CD4-positive, alpha-beta memory T cell (primary cell): ENCODE measurements at regions of chr2 and their contacts with region 1.

Region 1: DNA sequence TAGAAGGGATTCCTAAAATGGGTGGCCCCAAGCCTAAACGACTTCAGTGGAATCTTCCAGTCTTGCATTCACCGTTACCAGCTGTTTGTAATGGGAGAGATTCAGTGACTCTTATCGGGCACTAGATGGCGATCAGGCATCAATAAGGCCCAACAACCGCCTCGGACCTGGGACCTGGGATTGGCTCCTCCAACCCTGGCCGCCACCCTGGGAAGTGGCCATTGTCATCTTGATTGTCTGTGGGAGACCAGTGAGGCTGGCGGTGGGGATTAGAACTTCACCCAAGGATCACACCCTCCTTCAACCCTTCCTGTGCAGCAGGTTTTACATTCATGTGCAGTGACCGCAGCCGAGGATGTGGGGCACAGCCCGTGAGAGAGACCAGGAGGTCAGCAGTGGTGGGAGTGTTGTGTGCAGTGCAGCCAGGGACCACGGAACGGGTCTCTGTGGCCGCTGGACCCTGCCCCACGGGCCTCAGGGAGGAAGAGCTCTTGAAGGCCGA is 85.3 kb downstream of the SPP2 start:
- DNase-seq: peak; percentile 31 to 51 (median 45)
- H3K4me3 ChIP-seq: no peak overlapping the region
- H3K4me3 Mint-ChIP-seq: peak overlapping the region in 4 of 8 donors; percentile 9 to 43 (median 27)
- H3K27ac ChIP-seq: no peak overlapping the region
- H3K27ac Mint-ChIP-seq: peak overlapping the region; percentile 16 to 78 (median 57)
- H3K4me1 ChIP-seq: peaks cover 28% of the 10 kb centered on the region
- H3K4me1 Mint-ChIP-seq: peaks cover 20 to 46% (median 28%) of the 10 kb centered on the region in 4 donors
- H3K27me3 ChIP-seq: no peaks in the 10 kb centered on the region
- H3K27me3 Mint-ChIP-seq: no peaks in the 10 kb centered on the region

Region 2: GRCh38 chr2:233801357-233802131 is 334.2 kb before region 1 on chr2:
- CTCF ChIA-PET with region 1: no interaction called
- POLR2A ChIA-PET with region 1: no interaction called
- intact Hi-C with region 1: no loop called
- DNase-seq: no peak
- H3K4me3 ChIP-seq: no peak overlapping the region
- H3K4me3 Mint-ChIP-seq: no peak overlapping the region
- H3K27ac ChIP-seq: no peak overlapping the region
- H3K27ac Mint-ChIP-seq: no peak overlapping the region
- H3K4me1 ChIP-seq: no peaks in the 10 kb centered on the region
- H3K4me1 Mint-ChIP-seq: no peaks in the 10 kb centered on the region
- H3K27me3 ChIP-seq: no peaks in the 10 kb centered on the region
- H3K27me3 Mint-ChIP-seq: peaks cover 8 to 17% of the 10 kb centered on the region in 2 donors

Region 3: GRCh38 chr2:233811732-233812131 is 324.0 kb before region 1 on chr2:
- CTCF ChIA-PET with region 1: no interaction called
- POLR2A ChIA-PET with region 1: no interaction called
- intact Hi-C with region 1: no loop called
- DNase-seq: no peak
- H3K4me3 ChIP-seq: no peak overlapping the region
- H3K4me3 Mint-ChIP-seq: no peak overlapping the region
- H3K27ac ChIP-seq: no peak overlapping the region
- H3K27ac Mint-ChIP-seq: no peak overlapping the region
- H3K4me1 ChIP-seq: no peaks in the 10 kb centered on the region
- H3K4me1 Mint-ChIP-seq: no peaks in the 10 kb centered on the region
- H3K27me3 ChIP-seq: no peaks in the 10 kb centered on the region
- H3K27me3 Mint-ChIP-seq: peaks cover 6 to 9% of the 10 kb centered on the region in 2 donors

Region 4: DNA sequence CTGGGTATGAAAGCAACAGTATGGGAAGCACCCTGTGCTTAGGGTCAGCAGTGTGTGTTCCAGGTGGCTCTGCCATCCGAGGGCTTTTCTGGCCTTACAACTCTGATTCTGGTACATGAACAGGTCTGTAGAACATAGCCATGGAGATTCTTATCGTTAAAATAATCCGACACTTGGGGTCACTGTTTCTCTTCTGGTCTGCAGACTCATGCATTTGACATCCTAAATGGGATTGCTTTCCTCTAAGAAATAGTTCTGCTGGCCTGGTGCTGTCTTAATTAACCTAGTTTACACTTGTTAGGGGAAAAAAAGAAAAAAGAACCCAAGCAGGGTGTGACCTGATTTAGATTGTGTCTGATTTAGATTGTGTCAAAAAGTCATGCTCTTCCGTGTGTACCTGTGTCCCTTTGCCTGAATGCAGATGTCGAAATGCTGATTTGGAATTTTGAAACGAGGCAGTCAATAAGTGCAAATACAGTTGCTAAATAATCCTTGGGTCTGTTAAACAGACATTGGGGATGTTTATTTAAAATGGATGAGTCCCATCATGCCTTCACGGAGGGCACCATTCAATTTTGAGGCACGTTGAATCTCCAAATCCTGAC is 159.0 kb before region 1 on chr2:
- CTCF ChIA-PET with region 1: interaction called, 7 read pairs
- POLR2A ChIA-PET with region 1: interaction called, 3 read pairs
- intact Hi-C with region 1: loop called (anchors 1 kb)
- DNase-seq: peak; percentile 40 to 69 (median 66)
- H3K4me3 ChIP-seq: no peak overlapping the region
- H3K4me3 Mint-ChIP-seq: peak overlapping the region in 6 of 8 donors; percentile 1 to 66 (median 27)
- H3K27ac ChIP-seq: no peak overlapping the region
- H3K27ac Mint-ChIP-seq: peak overlapping the region in 6 of 7 donors; percentile 9 to 83 (median 48)
- H3K4me1 ChIP-seq: peaks cover 24% of the 10 kb centered on the region
- H3K4me1 Mint-ChIP-seq: peaks cover 25 to 38% (median 27%) of the 10 kb centered on the region in 4 donors
- H3K27me3 ChIP-seq: no peaks in the 10 kb centered on the region
- H3K27me3 Mint-ChIP-seq: no peaks in the 10 kb centered on the region

Region 5: DNA sequence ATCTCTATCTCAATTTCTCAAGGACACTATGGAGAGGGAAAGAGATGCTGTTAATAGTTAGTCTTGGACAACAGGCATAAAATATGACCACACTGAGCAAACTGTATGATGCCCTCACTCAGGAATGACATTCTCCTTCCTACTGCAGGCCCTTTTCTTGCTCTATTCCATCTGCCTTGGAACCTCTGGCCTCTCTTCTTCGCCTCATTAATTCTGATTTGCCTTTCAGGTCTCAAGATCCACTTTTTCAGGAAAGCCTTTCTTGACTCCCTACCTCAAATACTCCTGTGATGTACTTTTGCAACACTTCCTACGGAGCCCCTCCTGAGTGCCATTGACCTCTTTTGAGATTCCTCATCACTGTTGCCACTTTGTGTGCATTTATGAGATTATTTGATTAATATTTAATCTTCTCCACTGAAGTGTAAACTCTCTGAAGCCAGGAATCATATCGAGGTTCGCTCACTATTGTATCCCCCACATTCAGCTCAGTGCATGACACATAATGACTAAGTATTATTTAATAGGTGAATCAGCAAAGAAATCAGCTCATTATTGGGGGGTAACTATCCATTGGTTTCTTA is 106.5 kb before region 1 on chr2:
- CTCF ChIA-PET with region 1: no interaction called
- POLR2A ChIA-PET with region 1: no interaction called
- intact Hi-C with region 1: no loop called
- DNase-seq: no peak
- H3K4me3 ChIP-seq: no peak overlapping the region
- H3K4me3 Mint-ChIP-seq: peak overlapping the region in 2 of 8 donors; percentile 17 to 40
- H3K27ac ChIP-seq: no peak overlapping the region
- H3K27ac Mint-ChIP-seq: peak overlapping the region in 2 of 7 donors; percentile 30 to 57
- H3K4me1 ChIP-seq: peaks cover 86% of the 10 kb centered on the region
- H3K4me1 Mint-ChIP-seq: peaks cover 59 to 90% (median 72%) of the 10 kb centered on the region in 4 donors
- H3K27me3 ChIP-seq: no peaks in the 10 kb centered on the region
- H3K27me3 Mint-ChIP-seq: peaks cover 0 to 1% of the 10 kb centered on the region in 2 donors

Region 6: DNA sequence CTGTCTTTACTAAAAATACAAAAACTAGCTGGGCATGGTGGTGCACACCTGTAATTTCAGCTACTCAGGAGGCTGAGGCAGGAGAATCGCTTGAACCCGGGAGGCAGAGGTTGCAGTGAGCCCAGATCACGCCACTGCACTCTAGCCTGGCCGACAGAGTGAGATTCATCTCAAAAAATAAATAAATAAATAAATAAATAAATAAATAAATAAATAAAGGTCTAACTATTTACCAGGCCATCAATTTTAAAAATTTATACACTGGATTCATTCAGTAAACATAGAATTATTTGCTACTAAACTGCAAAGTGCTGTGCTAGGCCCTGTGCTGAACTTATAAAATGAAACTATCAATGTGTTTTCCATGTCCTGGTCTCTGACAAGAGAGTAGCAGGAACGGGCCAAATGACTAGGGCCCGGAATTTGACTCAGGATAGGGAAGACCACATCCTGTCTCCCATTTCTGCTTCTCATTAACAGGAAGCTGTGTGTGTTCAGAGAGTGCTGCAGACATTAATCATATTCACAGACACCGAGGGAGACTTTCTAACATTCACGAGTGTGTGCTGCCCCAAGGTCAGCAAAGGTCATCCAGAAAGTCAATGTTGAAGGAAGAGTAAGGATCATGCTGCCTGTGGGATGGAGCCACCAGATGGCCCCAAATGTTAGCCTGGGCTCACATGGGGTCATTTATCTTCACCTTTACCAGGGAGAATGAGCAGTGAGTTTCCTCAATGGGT is 10.5 kb after region 1 on chr2:
- CTCF ChIA-PET with region 1: interaction called, 26 read pairs
- POLR2A ChIA-PET with region 1: interaction called, 7 read pairs
- intact Hi-C with region 1: no loop called
- DNase-seq: no peak
- H3K4me3 ChIP-seq: no peak overlapping the region
- H3K4me3 Mint-ChIP-seq: peak overlapping the region in 7 of 8 donors; percentile 4 to 77 (median 5)
- H3K27ac ChIP-seq: no peak overlapping the region
- H3K27ac Mint-ChIP-seq: peak overlapping the region in 6 of 7 donors; percentile 53 to 88 (median 84)
- H3K4me1 ChIP-seq: peaks cover 45% of the 10 kb centered on the region
- H3K4me1 Mint-ChIP-seq: peaks cover 40 to 80% (median 53%) of the 10 kb centered on the region in 4 donors
- H3K27me3 ChIP-seq: no peaks in the 10 kb centered on the region
- H3K27me3 Mint-ChIP-seq: no peaks in the 10 kb centered on the region

Region 7: DNA sequence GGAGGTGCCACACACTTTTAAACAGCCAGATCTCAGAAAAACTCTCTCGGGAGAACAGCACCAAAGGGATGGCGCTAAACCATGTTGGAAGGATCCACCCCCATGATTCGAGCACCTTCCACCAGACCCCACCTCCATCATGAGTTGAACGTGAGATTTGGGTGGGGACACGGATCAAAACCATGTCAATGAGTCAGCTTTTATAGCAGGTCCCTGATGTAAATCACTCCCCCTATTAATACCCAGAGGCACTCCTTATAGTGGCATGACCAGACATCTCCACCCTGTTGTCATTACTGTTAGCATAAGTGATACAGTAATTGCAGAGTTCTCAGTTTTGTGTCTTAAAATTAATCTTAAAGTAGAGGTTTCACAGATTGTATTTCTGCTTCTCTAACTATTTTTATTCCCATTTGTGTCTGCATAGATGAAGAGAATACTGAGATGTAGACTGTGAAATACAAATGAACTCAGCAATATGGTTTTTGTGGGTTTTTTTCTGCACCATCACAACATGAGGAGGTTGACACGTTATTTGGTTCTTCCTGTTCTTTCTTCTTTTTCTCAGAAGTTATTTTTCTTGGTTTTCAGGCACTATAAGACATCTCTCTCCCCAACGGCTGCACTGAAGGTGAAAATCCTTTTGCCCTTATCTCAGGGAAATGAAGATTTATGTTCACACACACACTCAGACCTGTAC is 142.9 kb after region 1 on chr2:
- CTCF ChIA-PET with region 1: interaction called, 73 read pairs
- POLR2A ChIA-PET with region 1: interaction called, 3 read pairs
- intact Hi-C with region 1: no loop called
- DNase-seq: peak in 4 of 5 donors; percentile 55 to 68 (median 60)
- H3K4me3 ChIP-seq: no peak overlapping the region
- H3K4me3 Mint-ChIP-seq: peak overlapping the region in 6 of 8 donors; percentile 25 to 65 (median 46)
- H3K27ac ChIP-seq: no peak overlapping the region
- H3K27ac Mint-ChIP-seq: peak overlapping the region; percentile 53 to 83 (median 75)
- H3K4me1 ChIP-seq: peaks cover 58% of the 10 kb centered on the region
- H3K4me1 Mint-ChIP-seq: peaks cover 36 to 70% (median 52%) of the 10 kb centered on the region in 4 donors
- H3K27me3 ChIP-seq: no peaks in the 10 kb centered on the region
- H3K27me3 Mint-ChIP-seq: no peaks in the 10 kb centered on the region

Region 8: DNA sequence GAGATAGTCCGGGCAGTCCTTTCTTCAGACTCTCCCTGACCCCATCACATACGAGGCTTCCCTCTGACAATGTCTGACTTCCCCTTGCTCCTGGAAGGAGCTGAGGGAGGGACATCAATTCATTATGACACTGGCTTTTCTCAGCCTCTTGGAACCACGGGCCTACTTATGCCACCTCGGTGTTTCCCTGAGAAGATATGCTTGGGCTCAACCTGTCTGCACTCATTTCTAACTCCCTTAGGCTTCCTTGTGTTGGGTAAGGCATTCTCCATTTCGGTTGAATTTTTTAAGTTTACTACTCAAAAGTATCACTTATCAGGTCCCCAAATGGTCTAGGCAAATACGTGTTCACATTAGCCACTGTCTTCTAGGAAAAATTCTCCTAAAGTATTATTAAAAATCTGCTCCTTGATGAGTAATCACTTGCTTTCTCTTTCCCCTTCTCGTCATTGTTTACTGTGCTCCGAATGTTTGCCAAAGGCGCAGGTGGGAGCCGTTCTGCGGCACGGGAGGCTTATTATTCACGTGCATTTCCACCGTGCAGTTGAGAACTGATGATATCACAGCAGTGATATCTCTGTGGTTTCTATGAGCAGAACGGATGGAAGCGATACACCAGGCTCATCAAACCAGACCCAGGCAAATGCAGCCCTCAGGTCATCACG is 328.0 kb after region 1 on chr2:
- CTCF ChIA-PET with region 1: interaction called, 10 read pairs
- POLR2A ChIA-PET with region 1: no interaction called
- intact Hi-C with region 1: no loop called
- DNase-seq: peak; percentile 83 to 90 (median 87)
- H3K4me3 ChIP-seq: peak overlapping the region; percentile 12 to 48
- H3K4me3 Mint-ChIP-seq: peak overlapping the region; percentile 69 to 86 (median 81)
- H3K27ac ChIP-seq: peak overlapping the region; percentile 86
- H3K27ac Mint-ChIP-seq: peak overlapping the region; percentile 88 to 99 (median 97)
- H3K4me1 ChIP-seq: peaks cover 81% of the 10 kb centered on the region
- H3K4me1 Mint-ChIP-seq: peaks cover 49 to 94% (median 73%) of the 10 kb centered on the region in 4 donors
- H3K27me3 ChIP-seq: no peaks in the 10 kb centered on the region
- H3K27me3 Mint-ChIP-seq: no peaks in the 10 kb centered on the region